ENCODE measurements at regions of chr11 and their contacts with region 1.

Region 1: DNA sequence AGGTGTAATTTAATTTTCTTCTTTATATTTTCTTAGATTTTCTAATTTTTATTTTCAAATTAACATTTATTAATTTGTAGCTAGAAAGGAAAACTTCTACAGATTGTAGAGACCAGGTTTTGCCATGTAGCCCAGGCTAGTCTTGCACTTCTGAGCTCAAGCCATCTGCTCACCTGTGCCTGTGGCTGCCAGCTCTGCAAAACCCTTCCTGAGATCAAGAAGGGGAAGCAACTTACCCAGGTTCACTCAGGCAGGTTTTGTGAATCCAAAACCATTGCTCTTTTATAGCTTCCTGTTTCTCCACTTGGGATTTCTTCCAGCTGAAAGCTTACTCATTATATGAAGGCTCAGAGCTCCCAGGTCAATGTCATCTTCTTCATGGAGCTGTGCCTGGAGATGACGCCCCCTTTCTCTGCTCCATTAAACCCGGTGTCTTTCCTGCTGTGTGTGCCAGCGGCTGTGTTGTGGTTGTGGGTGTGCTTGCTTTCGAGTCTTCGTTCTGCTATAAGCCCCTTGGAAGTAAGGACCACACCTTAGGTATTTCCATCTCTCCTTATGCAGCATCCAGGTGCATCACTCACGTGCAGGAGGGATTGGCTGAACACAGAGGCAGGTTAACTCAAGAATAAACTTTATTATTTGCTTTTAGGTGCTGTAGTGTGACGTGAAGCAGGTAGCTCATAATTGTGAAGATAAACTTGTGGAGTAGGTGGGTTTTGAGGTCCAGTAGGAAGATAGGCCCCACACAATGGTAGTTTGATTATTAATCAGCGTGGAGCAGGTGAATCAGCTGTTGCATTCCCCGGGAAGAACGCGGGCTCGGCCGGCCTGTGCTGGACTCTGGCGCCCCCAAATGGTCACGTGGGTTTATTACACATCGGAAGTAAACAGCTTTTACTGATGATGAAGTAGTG is 42.2 kb upstream of the INCENP start:
- DNase-seq: peak; percentile 64
- ATAC-seq: peak; percentile 94
- H3K4me3 ChIP-seq: no peak overlapping the region
- H3K27ac ChIP-seq: no peak overlapping the region
- H3K4me1 ChIP-seq: peaks cover 0 to 9% of the 10 kb centered on the region in 2 experiments; a peak in 2 of 4 replicates
- H3K27me3 ChIP-seq: no peaks in the 10 kb centered on the region
- CTCF ChIP-seq: peak; percentile 76 to 95 (median 93)
- POLR2A ChIP-seq: no peak
- RAD21 ChIP-seq: peak; percentile 99

Region 2: DNA sequence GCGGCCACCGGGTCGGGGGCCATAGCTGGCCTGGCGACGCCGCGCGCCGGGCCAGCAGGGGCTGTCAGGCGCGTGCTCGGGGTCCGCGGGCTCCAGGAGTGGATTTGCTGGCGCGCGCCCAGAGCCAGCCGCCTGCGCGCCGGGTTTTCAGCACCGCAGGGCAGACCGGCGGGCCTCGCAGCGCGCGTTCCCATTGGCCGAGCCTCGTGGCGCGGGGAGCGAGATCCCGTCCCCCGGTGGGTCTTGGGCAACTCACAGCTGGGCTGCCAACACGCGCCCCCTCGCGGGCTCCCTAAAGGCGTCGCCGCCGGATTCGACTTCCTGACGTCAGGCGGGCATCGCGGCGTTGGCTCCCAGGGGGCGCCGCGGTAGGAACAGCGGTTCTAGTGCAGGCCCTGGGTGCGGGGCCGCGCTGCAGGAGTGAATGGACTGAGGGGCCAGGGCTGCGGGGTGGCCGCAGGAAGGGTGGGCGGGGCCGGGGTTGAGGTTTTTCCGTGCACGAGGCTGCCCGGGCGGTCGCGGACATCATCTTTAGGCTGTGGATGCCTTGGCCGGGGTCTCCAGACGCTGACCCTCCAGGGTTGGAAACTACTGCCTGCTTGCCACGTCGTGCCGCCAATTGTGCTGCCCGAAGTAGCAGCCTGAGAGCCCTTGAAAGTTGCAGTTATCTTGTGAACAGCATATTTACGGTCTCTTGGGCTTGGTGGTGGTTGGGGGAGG is 264.7 kb before region 1 on chr11 and contains the start of gene FADS1:
- CTCF ChIA-PET with region 1: interaction called, 22 read pairs
- POLR2A ChIA-PET with region 1: interaction called, 4 read pairs
- RAD21 ChIA-PET with region 1: no interaction called
- intact Hi-C with region 1: no loop called
- DNase-seq: peak; percentile 91
- ATAC-seq: peak; percentile 57
- H3K4me3 ChIP-seq: peak within 1 kb of the TSS; percentile 85 to 89
- H3K27ac ChIP-seq: peak within 1 kb of the TSS; percentile 96
- H3K4me1 ChIP-seq: peaks cover 32 to 57% of the 10 kb centered on the region in 2 experiments
- H3K27me3 ChIP-seq: no peaks in the 10 kb centered on the region
- CTCF ChIP-seq: peak in 2 of 3 experiments; percentile 41 to 64; a peak in 3 of 6 replicates
- POLR2A ChIP-seq: peak; percentile 68
- RAD21 ChIP-seq: no peak
- total RNA-seq, gene FADS1: 56.6 TPM

Region 3: DNA sequence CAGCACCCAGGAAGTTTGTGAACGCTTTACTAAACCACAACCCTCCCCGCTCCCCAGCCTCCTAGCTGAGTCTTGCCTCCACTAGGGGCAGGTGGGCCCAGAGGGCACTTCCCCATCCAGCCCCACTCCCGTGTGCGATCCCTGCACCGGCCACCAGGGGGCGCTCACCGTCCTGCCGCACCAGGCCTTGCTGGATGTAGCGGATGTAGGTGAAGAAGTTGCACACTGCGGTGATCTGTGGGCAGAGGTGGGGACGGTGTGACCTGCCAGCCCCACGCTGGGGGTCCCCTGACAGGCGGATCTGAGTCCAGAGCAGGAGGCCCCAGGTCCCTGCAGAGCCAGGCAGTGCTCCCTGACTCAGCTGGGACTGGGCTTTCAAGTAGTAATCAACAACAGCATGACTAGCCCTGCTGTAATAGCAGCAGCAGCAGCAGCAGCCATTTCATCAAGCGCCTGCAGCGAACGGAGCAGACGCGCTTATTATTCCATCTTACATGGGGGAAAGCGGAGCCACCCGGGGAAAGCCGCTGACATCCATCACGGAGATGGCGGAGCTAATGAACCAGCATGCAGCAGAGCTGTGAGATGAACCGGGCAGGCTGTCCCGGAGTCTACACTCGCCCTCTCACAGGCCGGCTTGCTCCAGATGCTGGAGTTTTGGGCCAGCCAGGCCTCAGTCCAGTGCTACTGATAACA is 182.3 kb before region 1 on chr11:
- CTCF ChIA-PET with region 1: interaction called, 134 read pairs
- POLR2A ChIA-PET with region 1: interaction called, 4 read pairs
- RAD21 ChIA-PET with region 1: interaction called, 18 to 19 read pairs
- intact Hi-C with region 1: loop called (anchors 1 kb)
- DNase-seq: peak; percentile 36
- ATAC-seq: peak; percentile 90
- H3K4me3 ChIP-seq: no peak overlapping the region
- H3K27ac ChIP-seq: no peak overlapping the region
- H3K4me1 ChIP-seq: 0 out of 4 replicates have a peak, but pooled peaks cover 0 to 3% of the 10 kb centered on the region in 2 experiments
- H3K27me3 ChIP-seq: no peaks in the 10 kb centered on the region
- CTCF ChIP-seq: peak; percentile 97 to 100 (median 100)
- POLR2A ChIP-seq: no peak
- RAD21 ChIP-seq: peak; percentile 95

Region 4: DNA sequence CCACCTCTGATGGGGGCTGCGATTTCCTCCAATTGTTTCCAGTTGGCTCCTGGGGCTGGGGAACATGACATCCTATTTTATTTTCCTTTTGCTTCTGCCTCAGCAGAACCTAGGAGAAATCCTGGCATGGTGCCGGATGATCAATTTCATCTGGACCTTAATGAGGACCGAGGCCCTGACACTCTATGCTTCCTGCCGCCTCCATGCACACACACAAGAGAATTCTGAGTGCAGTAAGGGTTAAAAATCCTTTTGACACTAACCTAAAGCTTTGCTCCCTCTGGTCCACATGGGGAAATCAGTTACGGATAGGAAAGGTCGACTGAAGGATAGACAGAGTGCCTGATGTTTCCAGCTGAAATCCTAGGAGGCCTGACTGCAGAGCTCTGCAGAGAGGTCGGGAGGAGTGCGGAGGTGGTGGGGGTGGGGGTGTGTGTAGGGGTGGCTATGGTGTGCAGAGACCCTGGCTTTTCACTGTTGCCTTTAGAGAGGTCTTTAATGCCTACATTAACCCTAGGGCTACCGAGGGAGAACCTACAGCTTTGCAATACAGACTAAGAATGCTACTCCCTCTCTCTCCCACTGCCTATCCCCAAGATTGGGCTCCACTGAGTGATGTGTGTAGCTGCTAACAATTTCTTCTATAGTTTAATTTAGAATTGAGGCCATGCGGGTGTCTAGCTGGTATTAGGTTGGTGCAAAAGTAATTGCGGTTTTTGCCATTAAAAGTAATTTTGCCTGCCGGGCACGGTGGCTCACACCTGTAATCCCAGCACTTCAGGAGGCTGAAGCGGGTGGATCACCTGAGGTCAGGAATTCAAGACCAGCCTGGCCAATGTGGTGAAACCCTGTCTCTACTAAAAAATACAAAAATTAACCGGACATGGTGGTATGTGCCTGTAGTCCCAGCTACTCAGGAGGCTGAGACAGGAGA is 11.4 kb before region 1 on chr11:
- CTCF ChIA-PET with region 1: interaction called, 13 read pairs
- POLR2A ChIA-PET with region 1: no interaction called
- RAD21 ChIA-PET with region 1: no interaction called
- intact Hi-C with region 1: no loop called
- DNase-seq: no peak
- ATAC-seq: no peak
- H3K4me3 ChIP-seq: no peak overlapping the region
- H3K27ac ChIP-seq: no peak overlapping the region
- H3K4me1 ChIP-seq: no peaks in the 10 kb centered on the region
- H3K27me3 ChIP-seq: no peaks in the 10 kb centered on the region
- CTCF ChIP-seq: no peak
- POLR2A ChIP-seq: no peak
- RAD21 ChIP-seq: no peak

Region 5: GRCh38 chr11:62855571-62856332 is 774.1 kb after region 1 on chr11:
- CTCF ChIA-PET with region 1: no interaction called
- POLR2A ChIA-PET with region 1: no interaction called
- RAD21 ChIA-PET with region 1: no interaction called
- intact Hi-C with region 1: no loop called
- DNase-seq: peak; percentile 96
- ATAC-seq: peak; percentile 80
- H3K4me3 ChIP-seq: peak overlapping the region; percentile 74 to 83
- H3K27ac ChIP-seq: peak overlapping the region; percentile 85
- H3K4me1 ChIP-seq: peaks cover 38 to 60% of the 10 kb centered on the region in 2 experiments
- H3K27me3 ChIP-seq: no peaks in the 10 kb centered on the region
- CTCF ChIP-seq: no peak
- POLR2A ChIP-seq: peak; percentile 100
- RAD21 ChIP-seq: no peak